ENCODE measurements at regions of chr1 and their contacts with region 1.

Region 1: GRCh38 chr1:39196244-39197215 is 8.0 kb upstream of the MACF1 start:
- DNase-seq: peak in 8 of 9 experiments; percentile 26 to 90 (median 70)
- ATAC-seq: peak; percentile 68
- H3K4me3 ChIP-seq: peak overlapping the region; percentile 4 to 9
- H3K4me3 Mint-ChIP-seq: peak overlapping the region; percentile 68
- H3K27ac ChIP-seq: peak overlapping the region; percentile 48 to 84
- H3K27ac Mint-ChIP-seq: peak overlapping the region; percentile 91
- H3K4me1 ChIP-seq: peaks cover 63% of the 10 kb centered on the region
- H3K4me1 Mint-ChIP-seq: peaks cover 80% of the 10 kb centered on the region
- H3K27me3 ChIP-seq: no peaks in the 10 kb centered on the region
- H3K27me3 Mint-ChIP-seq: no peaks in the 10 kb centered on the region
- CTCF ChIP-seq: no peak

Region 2: GRCh38 chr1:38990738-38991639 is 205.5 kb before region 1 on chr1 and contains the start of gene AKIRIN1:
- CTCF ChIA-PET with region 1: no interaction called
- POLR2A ChIA-PET with region 1: no interaction called
- intact Hi-C with region 1: loop called in 1 of 2 experiments (anchors 10 kb)
- DNase-seq: peak; percentile 81 to 98 (median 94)
- ATAC-seq: peak; percentile 90
- H3K4me3 ChIP-seq: peak within 1 kb of the TSS; percentile 53 to 93
- H3K4me3 Mint-ChIP-seq: peak within 1 kb of the TSS; percentile 87
- H3K27ac ChIP-seq: peak within 1 kb of the TSS; percentile 82 to 84
- H3K27ac Mint-ChIP-seq: peak within 1 kb of the TSS; percentile 89
- H3K4me1 ChIP-seq: peaks cover 40% of the 10 kb centered on the region
- H3K4me1 Mint-ChIP-seq: peaks cover 38% of the 10 kb centered on the region
- H3K27me3 ChIP-seq: no peaks in the 10 kb centered on the region
- H3K27me3 Mint-ChIP-seq: no peaks in the 10 kb centered on the region
- CTCF ChIP-seq: no peak
- total RNA-seq, gene AKIRIN1: 122 to 123 TPM

Region 3: GRCh38 chr1:39183503-39184353 is 12.8 kb before region 1 on chr1:
- CTCF ChIA-PET with region 1: interaction called, 49 read pairs
- POLR2A ChIA-PET with region 1: interaction called, 6 read pairs
- intact Hi-C with region 1: loop called (anchors 1 kb)
- DNase-seq: peak; percentile 60 to 93 (median 83)
- ATAC-seq: peak; percentile 87
- H3K4me3 ChIP-seq: no peak overlapping the region
- H3K4me3 Mint-ChIP-seq: no peak overlapping the region
- H3K27ac ChIP-seq: peak overlapping the region; percentile 46 to 69
- H3K27ac Mint-ChIP-seq: peak overlapping the region; percentile 97
- H3K4me1 ChIP-seq: peaks cover 20% of the 10 kb centered on the region
- H3K4me1 Mint-ChIP-seq: peaks cover 34% of the 10 kb centered on the region
- H3K27me3 ChIP-seq: no peaks in the 10 kb centered on the region
- H3K27me3 Mint-ChIP-seq: no peaks in the 10 kb centered on the region
- CTCF ChIP-seq: peak; percentile 71

Region 4: GRCh38 chr1:39230261-39231190 is 34.0 kb after region 1 on chr1:
- CTCF ChIA-PET with region 1: interaction called, 44 read pairs
- POLR2A ChIA-PET with region 1: interaction called, 5 read pairs
- intact Hi-C with region 1: loop called (anchors 5 kb)
- DNase-seq: peak in 3 of 9 experiments; percentile 19 to 45 (median 24)
- ATAC-seq: peak; percentile 49
- H3K4me3 ChIP-seq: no peak overlapping the region
- H3K4me3 Mint-ChIP-seq: peak overlapping the region; percentile 16
- H3K27ac ChIP-seq: peak overlapping the region in 1 of 2 experiments; percentile 73
- H3K27ac Mint-ChIP-seq: peak overlapping the region; percentile 79
- H3K4me1 ChIP-seq: peaks cover 32% of the 10 kb centered on the region
- H3K4me1 Mint-ChIP-seq: peaks cover 59% of the 10 kb centered on the region
- H3K27me3 ChIP-seq: no peaks in the 10 kb centered on the region
- H3K27me3 Mint-ChIP-seq: no peaks in the 10 kb centered on the region
- CTCF ChIP-seq: no peak

Region 5: GRCh38 chr1:39268112-39268581 is 71.6 kb after region 1 on chr1:
- CTCF ChIA-PET with region 1: interaction called, 622 read pairs
- POLR2A ChIA-PET with region 1: interaction called, 4 read pairs
- intact Hi-C with region 1: no loop called
- DNase-seq: peak in 3 of 9 experiments; percentile 16 to 30 (median 21)
- ATAC-seq: peak; percentile 54
- H3K4me3 ChIP-seq: no peak overlapping the region
- H3K4me3 Mint-ChIP-seq: peak overlapping the region; percentile 61
- H3K27ac ChIP-seq: no peak overlapping the region
- H3K27ac Mint-ChIP-seq: peak overlapping the region; percentile 60
- H3K4me1 ChIP-seq: peaks cover 22% of the 10 kb centered on the region
- H3K4me1 Mint-ChIP-seq: peaks cover 82% of the 10 kb centered on the region
- H3K27me3 ChIP-seq: no peaks in the 10 kb centered on the region
- H3K27me3 Mint-ChIP-seq: no peaks in the 10 kb centered on the region
- CTCF ChIP-seq: no peak

Region 6: GRCh38 chr1:39408641-39409054 is 212.1 kb after region 1 on chr1:
- CTCF ChIA-PET with region 1: interaction called, 26 read pairs
- POLR2A ChIA-PET with region 1: no interaction called
- intact Hi-C with region 1: loop called in 1 of 2 experiments (anchors 5 kb)
- DNase-seq: peak; percentile 50 to 91 (median 83)
- ATAC-seq: peak; percentile 87
- H3K4me3 ChIP-seq: peak overlapping the region; percentile 50 to 55
- H3K4me3 Mint-ChIP-seq: peak overlapping the region; percentile 88
- H3K27ac ChIP-seq: peak overlapping the region in 1 of 2 experiments; percentile 38
- H3K27ac Mint-ChIP-seq: no peak overlapping the region
- H3K4me1 ChIP-seq: peaks cover 35% of the 10 kb centered on the region
- H3K4me1 Mint-ChIP-seq: peaks cover 45% of the 10 kb centered on the region
- H3K27me3 ChIP-seq: no peaks in the 10 kb centered on the region
- H3K27me3 Mint-ChIP-seq: no peaks in the 10 kb centered on the region
- CTCF ChIP-seq: no peak

Region 7: GRCh38 chr1:40818264-40818961 is 1621.9 kb after region 1 on chr1:
- CTCF ChIA-PET with region 1: no interaction called
- POLR2A ChIA-PET with region 1: no interaction called
- intact Hi-C with region 1: loop called in 1 of 2 experiments (anchors 5 kb)
- DNase-seq: peak; percentile 76 to 94 (median 88)
- ATAC-seq: peak; percentile 95
- H3K4me3 ChIP-seq: peak overlapping the region; percentile 54 to 76
- H3K4me3 Mint-ChIP-seq: peak overlapping the region; percentile 83
- H3K27ac ChIP-seq: peak overlapping the region; percentile 39 to 66
- H3K27ac Mint-ChIP-seq: peak overlapping the region; percentile 85
- H3K4me1 ChIP-seq: peaks cover 10% of the 10 kb centered on the region
- H3K4me1 Mint-ChIP-seq: peaks cover 13% of the 10 kb centered on the region
- H3K27me3 ChIP-seq: no peaks in the 10 kb centered on the region
- H3K27me3 Mint-ChIP-seq: no peaks in the 10 kb centered on the region
- CTCF ChIP-seq: no peak

Measured in CD8-positive, alpha-beta T cell (primary cell).